Ascending aorta (tissue), 2 donors: ENCODE measurements at regions of chr11 and their contacts with region 1.

Region 1: DNA sequence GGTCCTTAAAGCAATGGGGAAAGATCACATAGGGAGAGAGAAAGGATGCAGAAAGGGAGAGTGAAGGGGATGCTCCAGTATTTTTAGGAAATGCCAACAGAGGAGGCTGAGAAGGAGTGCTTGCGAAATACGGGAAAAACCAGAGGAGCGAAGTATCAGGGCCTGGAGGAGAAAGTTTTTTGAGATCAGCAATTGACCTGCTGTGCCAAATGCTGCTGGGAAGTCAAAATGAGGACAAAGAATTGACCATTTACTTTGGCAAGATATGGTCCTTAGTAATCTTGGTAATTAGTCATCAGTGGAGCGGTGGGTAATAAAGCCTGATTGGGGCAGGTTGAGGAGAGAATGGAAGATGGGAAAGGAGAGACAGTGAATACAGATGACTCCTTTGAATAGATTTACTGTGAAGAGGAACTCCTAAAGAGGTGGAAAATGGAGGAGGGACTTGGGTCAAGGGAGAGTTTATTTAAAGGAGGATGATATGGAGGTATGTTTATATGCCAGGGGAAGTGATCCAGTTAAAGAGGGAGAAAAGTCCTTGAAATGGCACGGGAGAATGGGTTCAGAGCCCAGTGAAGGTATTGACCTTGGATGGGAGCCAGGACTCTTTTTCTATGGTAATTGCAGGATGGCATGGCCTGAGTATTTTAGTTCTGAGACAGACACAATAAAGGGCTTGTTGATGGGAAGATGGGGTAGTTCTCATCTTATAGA is 111.5 kb downstream of the PKNOX2 start:
- DNase-seq: no peak
- H3K4me3 ChIP-seq: no peak overlapping the region
- H3K27ac ChIP-seq: peak overlapping the region in 1 of 2 donors; percentile 14
- H3K4me1 ChIP-seq: peaks cover 4 to 10% of the 10 kb centered on the region in 2 donors
- H3K27me3 ChIP-seq: no peaks in the 10 kb centered on the region
- CTCF ChIP-seq: no peak

Region 2: GRCh38 chr11:125345421-125346178 is 69.5 kb after region 1 on chr11:
- intact Hi-C with region 1: loop called (anchors 5 kb)
- DNase-seq: peak; percentile 46 to 90
- H3K4me3 ChIP-seq: peak overlapping the region in 1 of 2 donors; percentile 16
- H3K27ac ChIP-seq: peak overlapping the region; percentile 61 to 83
- H3K4me1 ChIP-seq: peaks cover 0 to 11% of the 10 kb centered on the region in 2 donors
- H3K27me3 ChIP-seq: no peaks in the 10 kb centered on the region
- CTCF ChIP-seq: peak; percentile 85 to 92 (median 88)